Stomach (tissue), 19 donors: ENCODE measurements at regions of chr17 and their contacts with region 1.

Region 1: DNA sequence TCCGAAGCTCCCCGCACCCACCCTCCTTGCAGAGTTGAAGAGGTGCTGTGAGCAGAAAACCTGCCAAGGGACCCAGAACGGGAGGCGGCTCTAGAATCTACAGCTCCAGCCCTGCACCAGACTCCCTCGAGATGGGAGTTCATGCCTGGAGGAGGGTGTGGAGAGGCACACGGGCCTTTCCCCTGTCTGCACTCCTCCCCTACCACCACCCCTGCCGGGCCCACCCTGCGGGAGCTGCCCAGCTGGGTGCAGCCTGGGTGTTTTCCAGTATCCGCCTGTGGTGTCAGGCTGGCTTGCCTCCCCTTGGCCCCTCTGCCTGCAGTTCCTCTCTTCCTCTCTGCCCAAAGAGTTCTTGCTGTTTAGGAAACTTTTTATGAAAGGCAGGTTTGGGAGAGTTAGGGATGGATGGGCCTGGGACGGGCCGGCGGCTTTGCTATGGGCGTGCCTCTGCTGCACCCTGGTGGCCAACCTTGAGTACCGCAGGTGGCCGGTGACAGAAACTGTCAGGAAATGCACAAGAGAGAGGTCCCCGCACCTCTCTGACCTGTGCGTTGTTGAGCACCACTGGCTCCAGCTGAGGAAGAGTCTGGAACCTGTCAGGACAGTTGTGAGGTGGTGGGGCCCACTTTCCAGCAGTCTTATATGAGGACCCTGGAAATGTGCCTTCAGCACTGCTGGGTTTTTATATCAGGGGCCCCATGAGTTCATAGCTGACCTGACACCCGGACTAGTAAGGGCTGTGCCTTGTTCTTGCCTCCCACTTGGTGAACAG is 354.1 kb downstream of the SEC14L1 start:
- DNase-seq: peak; percentile 82 to 92
- H3K4me3 ChIP-seq: no peak overlapping the region
- H3K27ac ChIP-seq: peak overlapping the region in 4 of 5 donors; percentile 15 to 68 (median 46)
- H3K4me1 ChIP-seq: peaks cover 5 to 27% (median 17%) of the 10 kb centered on the region in 4 donors
- H3K27me3 ChIP-seq: no peaks in the 10 kb centered on the region
- CTCF ChIP-seq: peak in 6 of 7 experiments; percentile 96 to 99 (median 98)
- EP300 ChIP-seq: no peak
- POLR2A ChIP-seq: no peak

Region 2: GRCh38 chr17:77331301-77331864 is 163.5 kb before region 1 on chr17:
- intact Hi-C with region 1: loop called (anchors 5 kb)
- DNase-seq: peak; percentile 96
- H3K4me3 ChIP-seq: peak overlapping the region in 3 of 4 donors; percentile 18 to 24 (median 20)
- H3K27ac ChIP-seq: peak overlapping the region in 4 of 5 donors; percentile 67 to 82 (median 80)
- H3K4me1 ChIP-seq: peaks cover 20 to 75% (median 35%) of the 10 kb centered on the region in 4 donors
- H3K27me3 ChIP-seq: no peaks in the 10 kb centered on the region
- CTCF ChIP-seq: peak in 5 of 7 experiments; percentile 92 to 98 (median 96)
- EP300 ChIP-seq: no peak
- POLR2A ChIP-seq: no peak

Region 3: DNA sequence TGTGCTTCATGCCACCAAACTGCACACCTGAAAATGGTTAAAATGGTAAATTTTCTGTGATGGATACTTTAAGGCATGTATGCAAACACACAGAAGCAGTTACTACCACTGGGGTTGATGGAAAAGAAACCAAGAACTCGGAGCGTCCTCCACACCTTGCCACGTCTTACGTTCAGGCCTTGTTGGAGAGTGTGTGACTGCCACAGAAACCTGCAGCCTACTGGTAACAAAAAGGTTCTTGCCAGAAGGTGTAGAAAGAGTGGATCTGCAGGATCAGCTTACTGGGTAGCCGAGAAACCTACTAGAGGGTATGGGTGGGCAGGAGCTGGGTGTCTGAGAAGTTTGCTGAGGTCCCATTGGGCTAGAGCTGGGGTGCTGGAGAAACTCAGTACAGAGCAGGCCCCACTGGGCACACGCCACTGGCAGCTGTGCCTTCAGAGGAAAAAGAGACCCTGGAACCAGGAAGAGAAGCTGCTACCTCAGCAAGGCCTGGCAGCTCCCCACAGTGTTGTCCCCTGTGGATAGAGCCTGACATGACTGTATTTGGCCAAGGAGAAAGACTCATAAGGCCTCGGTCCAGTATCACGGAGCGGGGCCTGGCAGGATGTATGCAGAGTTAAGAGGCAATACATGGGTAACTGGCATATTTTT is 149.5 kb before region 1 on chr17:
- intact Hi-C with region 1: no loop called
- DNase-seq: peak in 1 of 2 donors; percentile 14
- H3K4me3 ChIP-seq: no peak overlapping the region
- H3K27ac ChIP-seq: no peak overlapping the region
- H3K4me1 ChIP-seq: peaks cover 18 to 56% (median 25%) of the 10 kb centered on the region in 4 donors
- H3K27me3 ChIP-seq: no peaks in the 10 kb centered on the region
- CTCF ChIP-seq: no peak
- EP300 ChIP-seq: no peak
- POLR2A ChIP-seq: no peak